GM10248 (cell line): ENCODE measurements at regions of chr5 and their contacts with region 1.

Region 1: GRCh38 chr5:132820162-132820754 is 7.2 kb downstream of the SOWAHA start:
- DNase-seq: peak; percentile 90
- CTCF ChIP-seq: peak; percentile 88

Region 2: GRCh38 chr5:132506094-132506692 is 314.1 kb before region 1 on chr5:
- CTCF ChIA-PET with region 1: interaction called, 90 read pairs
- POLR2A ChIA-PET with region 1: no interaction called
- DNase-seq: peak; percentile 62
- CTCF ChIP-seq: peak; percentile 74

Region 3: GRCh38 chr5:132591145-132591544 is 229.1 kb before region 1 on chr5:
- CTCF ChIA-PET with region 1: interaction called, 24 read pairs
- POLR2A ChIA-PET with region 1: no interaction called
- DNase-seq: peak; percentile 20
- CTCF ChIP-seq: peak; percentile 45

Region 4: DNA sequence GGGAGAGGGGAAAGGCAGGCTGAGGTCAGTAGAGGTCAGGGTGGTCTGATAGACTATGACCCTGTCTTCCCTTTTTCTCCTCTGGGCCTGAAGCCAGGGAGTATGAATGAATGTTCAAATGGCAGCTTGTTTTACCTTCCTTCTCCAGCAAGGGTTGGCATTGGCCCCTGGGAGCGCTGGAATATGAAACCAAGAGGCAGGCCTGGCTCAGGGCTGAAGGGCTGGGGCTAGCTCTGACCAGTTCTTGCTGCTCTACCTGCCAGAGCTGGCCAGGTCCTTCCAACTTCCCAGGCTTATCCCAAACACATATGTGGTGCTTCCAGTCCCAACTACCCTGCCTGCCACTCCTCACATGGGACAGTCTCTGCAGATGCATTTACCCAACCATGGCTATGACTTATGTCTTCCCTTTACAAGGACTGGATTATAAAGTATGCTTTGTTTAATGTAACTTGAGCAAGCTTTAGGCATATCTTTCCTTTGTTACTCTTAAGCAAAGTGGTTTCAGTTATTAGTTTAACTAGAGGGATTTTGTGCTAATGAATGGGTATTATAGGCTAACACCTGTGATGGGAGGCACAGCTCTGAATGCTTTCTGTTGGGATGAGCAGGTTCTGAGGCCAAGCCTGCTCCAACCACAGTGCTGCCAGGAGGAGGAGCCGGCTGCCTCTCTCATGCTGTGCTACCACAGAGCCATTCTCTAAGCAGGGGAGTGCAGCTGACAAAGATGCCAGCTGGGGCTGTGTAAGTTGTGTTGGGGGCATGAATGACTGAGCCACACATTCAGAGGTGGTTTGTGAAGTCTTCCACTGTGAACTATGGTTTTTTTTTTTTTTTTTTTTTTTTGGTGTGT is 66.9 kb before region 1 on chr5:
- CTCF ChIA-PET with region 1: interaction called, 82 read pairs
- POLR2A ChIA-PET with region 1: no interaction called
- DNase-seq: no peak
- CTCF ChIP-seq: peak; percentile 35

Region 5: DNA sequence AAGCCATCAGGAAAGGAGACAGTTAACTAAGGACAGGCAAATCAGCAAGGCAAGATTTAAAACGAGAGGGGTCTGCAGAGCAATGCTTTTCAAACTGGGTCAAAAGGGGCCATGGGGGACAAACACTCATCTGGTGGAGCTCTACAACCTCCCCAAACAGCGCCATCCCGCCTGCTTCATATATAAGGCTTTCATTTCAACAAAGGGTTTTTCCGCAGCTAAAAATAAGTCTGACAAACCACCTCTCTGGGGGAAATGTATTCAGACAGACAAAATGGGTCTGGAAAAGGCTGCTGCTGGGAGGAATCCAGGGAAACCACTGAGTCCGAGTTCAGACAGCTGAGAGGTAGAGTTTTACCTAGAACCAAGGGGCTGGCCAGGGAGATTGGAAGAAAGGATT is 34.9 kb before region 1 on chr5:
- CTCF ChIA-PET with region 1: interaction called, 15 read pairs
- POLR2A ChIA-PET with region 1: no interaction called
- DNase-seq: peak; percentile 17
- CTCF ChIP-seq: no peak

Region 6: GRCh38 chr5:132807163-132807838 is 13.0 kb before region 1 on chr5:
- CTCF ChIA-PET with region 1: interaction called, 58 read pairs
- POLR2A ChIA-PET with region 1: no interaction called
- DNase-seq: no peak
- CTCF ChIP-seq: peak; percentile 6

Region 7: GRCh38 chr5:132866342-132867045 is 46.2 kb after region 1 on chr5 and contains the starts of genes GDF9 and UQCRQ:
- CTCF ChIA-PET with region 1: interaction called, 215 read pairs
- POLR2A ChIA-PET with region 1: no interaction called
- DNase-seq: peak; percentile 98
- CTCF ChIP-seq: no peak

Region 8: DNA sequence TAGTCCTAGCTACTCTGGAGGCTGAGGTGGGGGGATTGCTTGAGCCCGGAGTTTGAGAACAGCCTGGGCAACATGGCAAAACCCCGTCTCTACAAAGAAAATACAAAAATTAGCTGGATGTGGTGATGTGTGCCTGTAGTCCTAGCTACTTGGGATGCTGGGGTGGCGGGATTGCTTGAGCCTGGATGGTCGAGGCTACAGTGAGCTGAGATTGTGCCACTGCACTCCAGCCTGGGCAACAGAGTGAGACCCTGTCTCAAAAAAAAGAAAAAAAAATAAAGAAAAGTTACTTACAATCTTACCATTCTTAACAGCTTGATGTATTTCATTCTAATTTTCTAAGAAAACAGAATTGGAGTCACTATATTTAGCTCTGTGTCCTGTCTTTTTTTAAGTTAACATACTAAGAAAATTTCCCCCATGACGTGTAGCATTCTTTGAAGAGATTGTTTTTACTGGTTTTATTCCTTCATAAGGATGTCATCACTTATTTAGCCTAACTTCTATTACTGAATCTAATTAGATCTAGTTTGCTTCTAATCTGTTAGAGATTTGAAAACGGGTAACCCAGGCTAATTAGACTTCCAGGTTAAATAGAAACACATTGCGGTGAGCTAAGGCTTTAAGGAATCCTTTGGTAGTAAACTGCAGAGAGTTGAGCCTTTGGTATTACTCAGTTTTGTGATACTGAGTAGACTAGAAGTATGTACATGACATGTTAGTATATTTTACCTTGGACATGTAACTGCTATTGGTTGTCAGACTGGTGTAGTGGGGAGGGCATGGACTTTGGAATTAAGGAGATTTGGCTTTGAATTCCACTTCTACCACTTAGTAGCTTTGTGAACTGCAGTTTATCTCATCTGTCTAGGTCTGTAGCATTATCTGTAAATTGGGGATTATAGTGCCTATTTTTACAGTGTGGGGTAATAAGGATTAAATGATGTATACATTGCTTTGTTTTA is 255.6 kb after region 1 on chr5:
- CTCF ChIA-PET with region 1: no interaction called
- POLR2A ChIA-PET with region 1: no interaction called
- DNase-seq: no peak
- CTCF ChIP-seq: no peak

Region 9: DNA sequence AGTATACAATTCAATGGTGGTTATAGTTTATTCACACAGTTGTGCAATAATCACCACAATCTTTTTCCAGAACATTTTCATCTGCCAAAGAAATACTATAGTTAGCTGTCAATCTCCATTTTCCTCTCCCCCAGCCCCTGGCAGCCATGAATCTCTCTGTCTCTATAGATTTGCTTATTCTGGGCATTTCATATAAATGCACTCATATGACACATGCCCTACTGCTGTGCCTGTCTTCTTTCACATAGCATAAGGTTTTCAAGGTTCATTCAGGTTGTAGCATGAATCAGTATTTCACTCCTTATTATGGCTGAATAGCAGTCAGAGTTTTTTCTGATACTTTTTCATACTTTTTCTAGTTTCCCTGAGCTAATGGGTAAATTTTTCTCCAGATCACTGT is 359.1 kb after region 1 on chr5:
- CTCF ChIA-PET with region 1: no interaction called
- POLR2A ChIA-PET with region 1: no interaction called
- DNase-seq: no peak
- CTCF ChIP-seq: no peak